PC-9 (cell line): ENCODE measurements at regions of chr16 and their contacts with region 1.

Region 1: GRCh38 chr16:23302045-23302956 is at the start of gene SCNN1B:
- DNase-seq: peak; percentile 42 to 48
- H3K4me3 ChIP-seq: peak within 1 kb of the TSS; percentile 84
- H3K27ac ChIP-seq: no peak within 1 kb of the TSS
- H3K4me1 ChIP-seq: peaks cover 26% of the 10 kb centered on the region
- H3K27me3 ChIP-seq: no peaks in the 10 kb centered on the region
- CTCF ChIP-seq: no peak
- total RNA-seq, gene SCNN1B: 0.57 and 0.60 TPM in 2 replicates

Region 2: GRCh38 chr16:23182460-23183309 is 119.6 kb before region 1 on chr16 and contains the start of gene SCNN1G:
- CTCF ChIA-PET with region 1: no interaction called
- POLR2A ChIA-PET with region 1: no interaction called
- intact Hi-C with region 1: loop called (anchors 2 kb)
- DNase-seq: peak; percentile 75 to 99
- H3K4me3 ChIP-seq: peak within 1 kb of the TSS; percentile 81
- H3K27ac ChIP-seq: no peak within 1 kb of the TSS
- H3K4me1 ChIP-seq: peaks cover 27% of the 10 kb centered on the region
- H3K27me3 ChIP-seq: no peaks in the 10 kb centered on the region
- CTCF ChIP-seq: peak; percentile 85
- total RNA-seq, gene SCNN1G: not detected in 2 replicates